Dendritic cell treated with granulocyte-macrophage colony-stimulating factor and Interleukin-4, amounts not matched to agents 40 ng/mL and 50 ng/mL, for 4 days (primary cell): ENCODE measurements at regions of chr9 and their contacts with region 1.

Region 1: GRCh38 chr9:124617471-124618141 is 110.4 kb upstream of the NR5A1 start:
- H3K4me3 Mint-ChIP-seq: no peak overlapping the region
- H3K27ac Mint-ChIP-seq: no peak overlapping the region
- H3K4me1 Mint-ChIP-seq: peaks cover 5% of the 10 kb centered on the region
- H3K27me3 Mint-ChIP-seq: no peaks in the 10 kb centered on the region

Region 2: GRCh38 chr9:124764774-124765438 is 147.3 kb after region 1 on chr9:
- intact Hi-C with region 1: loop called (anchors 2 kb)
- H3K4me3 Mint-ChIP-seq: no peak overlapping the region
- H3K27ac Mint-ChIP-seq: no peak overlapping the region
- H3K4me1 Mint-ChIP-seq: peaks cover 41% of the 10 kb centered on the region
- H3K27me3 Mint-ChIP-seq: peaks cover 11% of the 10 kb centered on the region